ENCODE measurements at regions of chr20 and their contacts with region 1.

Region 1: GRCh38 chr20:7617797-7618196 is 322.5 kb downstream of the HAO1 start:
- DNase-seq: no peak
- H3K4me3 ChIP-seq: no peak overlapping the region
- H3K27ac ChIP-seq: no peak overlapping the region
- H3K4me1 ChIP-seq: no peaks in the 10 kb centered on the region
- H3K27me3 ChIP-seq: no peaks in the 10 kb centered on the region
- CTCF ChIP-seq: no peak
- EP300 ChIP-seq: no peak
- POLR2A ChIP-seq: no peak

Region 2: DNA sequence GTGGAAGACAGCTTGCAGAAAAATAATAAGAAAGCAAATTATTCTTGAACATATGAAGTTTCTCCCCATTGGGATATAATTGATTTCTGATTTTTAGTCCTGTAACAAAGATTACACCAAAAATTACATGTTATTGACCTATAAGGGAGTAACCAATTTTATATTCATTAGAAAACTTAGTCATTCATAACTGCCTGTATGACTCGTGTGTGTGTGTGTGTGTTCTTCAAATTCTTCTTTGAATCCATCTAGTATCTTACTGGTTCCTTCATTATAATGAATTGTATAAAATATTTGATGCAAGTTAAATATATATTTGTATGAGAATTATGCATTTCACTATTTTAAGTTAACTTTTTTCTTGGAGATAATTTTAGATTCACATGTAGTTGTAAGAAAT is 12.1 kb after region 1 on chr20:
- in situ Hi-C with region 1: no loop called
- intact Hi-C with region 1: loop called (anchors 2 kb)
- DNase-seq: no peak
- H3K4me3 ChIP-seq: no peak overlapping the region
- H3K27ac ChIP-seq: no peak overlapping the region
- H3K4me1 ChIP-seq: no peaks in the 10 kb centered on the region
- H3K27me3 ChIP-seq: no peaks in the 10 kb centered on the region
- CTCF ChIP-seq: no peak
- EP300 ChIP-seq: no peak
- POLR2A ChIP-seq: no peak